ENCODE measurements at regions of chr11 and their contacts with region 1.

Region 1: DNA sequence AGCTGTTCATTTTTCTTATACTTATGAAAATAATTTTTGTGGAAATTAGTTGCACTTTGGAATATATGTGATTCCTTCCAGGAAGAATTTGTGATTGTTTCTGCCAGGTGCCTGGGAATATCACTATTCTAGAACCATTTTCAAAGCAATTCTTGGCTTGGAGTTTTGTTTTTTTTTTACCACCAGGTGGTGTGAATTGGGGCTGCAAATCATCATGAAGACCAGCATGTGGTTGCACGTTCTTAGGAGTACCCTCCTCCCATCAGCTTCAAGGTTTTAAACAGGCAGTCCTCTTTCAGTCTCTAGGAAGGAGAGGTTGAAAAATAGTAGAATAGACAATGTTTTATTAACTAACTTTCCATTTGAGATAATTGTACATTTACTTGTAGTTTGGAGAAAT is 25.9 kb downstream of the USP47 start:
- DNase-seq: no peak
- H3K4me3 ChIP-seq: no peak overlapping the region
- H3K27ac ChIP-seq: no peak overlapping the region
- H3K4me1 ChIP-seq: peaks cover 3 to 10% (median 8%) of the 10 kb centered on the region in 4 experiments
- H3K27me3 ChIP-seq: no peaks in the 10 kb centered on the region
- CTCF ChIP-seq: no peak
- EP300 ChIP-seq: no peak
- POLR2A ChIP-seq: no peak
- RAD21 ChIP-seq: no peak

Region 2: GRCh38 chr11:11351042-11351586 is 516.6 kb before region 1 on chr11:
- CTCF ChIA-PET with region 1: interaction called, 10 read pairs
- POLR2A ChIA-PET with region 1: no interaction called
- DNase-seq: no peak
- H3K4me3 ChIP-seq: no peak overlapping the region
- H3K27ac ChIP-seq: no peak overlapping the region
- H3K4me1 ChIP-seq: no peaks in the 10 kb centered on the region
- H3K27me3 ChIP-seq: no peaks in the 10 kb centered on the region
- CTCF ChIP-seq: no peak
- EP300 ChIP-seq: no peak
- POLR2A ChIP-seq: no peak
- RAD21 ChIP-seq: no peak

Region 3: DNA sequence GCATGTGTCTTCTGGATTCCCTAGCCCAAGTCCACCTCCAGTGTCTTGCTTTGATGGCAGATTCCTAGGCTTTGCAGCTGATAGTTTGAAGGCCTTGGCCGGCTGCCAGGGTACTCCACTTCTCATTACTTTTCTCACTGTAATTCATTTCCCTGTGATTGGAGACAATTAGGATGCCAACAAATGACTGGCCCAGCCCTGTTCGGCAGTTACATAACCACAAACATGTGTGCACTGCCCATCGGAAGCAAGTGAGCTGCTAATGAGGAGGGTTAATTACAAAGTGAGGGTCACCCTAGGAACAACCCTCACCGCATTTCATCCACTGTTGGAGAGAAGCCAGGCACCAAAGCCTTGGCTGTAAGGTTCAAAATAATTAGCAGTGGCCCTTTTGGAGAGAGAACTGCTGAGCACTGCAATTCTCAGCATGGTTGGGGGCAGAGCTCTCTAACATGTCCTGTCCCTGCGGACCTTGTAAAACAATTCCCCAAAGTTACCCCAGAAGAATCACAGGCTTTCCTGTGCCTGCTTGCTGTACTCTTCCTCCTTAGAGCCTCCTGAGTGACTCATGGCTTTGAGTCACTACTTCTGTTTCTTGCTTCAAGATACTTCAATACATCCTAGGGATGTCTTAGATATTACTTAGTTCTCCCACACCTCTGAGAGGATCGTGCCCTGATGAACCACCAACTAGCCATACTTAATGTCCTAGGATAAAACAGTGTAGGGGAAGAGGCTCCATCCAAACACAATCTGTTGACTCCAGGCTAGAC is 136.2 kb before region 1 on chr11:
- CTCF ChIA-PET with region 1: no interaction called
- POLR2A ChIA-PET with region 1: no interaction called
- DNase-seq: no peak
- H3K4me3 ChIP-seq: no peak overlapping the region
- H3K27ac ChIP-seq: no peak overlapping the region
- H3K4me1 ChIP-seq: peaks cover 2 to 6% (median 5%) of the 10 kb centered on the region in 4 experiments; a peak in 5 of 7 replicates
- H3K27me3 ChIP-seq: peaks cover 0 to 1% (median 0%) of the 10 kb centered on the region in 4 experiments; a peak in 1 of 7 replicates
- CTCF ChIP-seq: no peak
- EP300 ChIP-seq: no peak
- POLR2A ChIP-seq: no peak
- RAD21 ChIP-seq: no peak

Region 4: DNA sequence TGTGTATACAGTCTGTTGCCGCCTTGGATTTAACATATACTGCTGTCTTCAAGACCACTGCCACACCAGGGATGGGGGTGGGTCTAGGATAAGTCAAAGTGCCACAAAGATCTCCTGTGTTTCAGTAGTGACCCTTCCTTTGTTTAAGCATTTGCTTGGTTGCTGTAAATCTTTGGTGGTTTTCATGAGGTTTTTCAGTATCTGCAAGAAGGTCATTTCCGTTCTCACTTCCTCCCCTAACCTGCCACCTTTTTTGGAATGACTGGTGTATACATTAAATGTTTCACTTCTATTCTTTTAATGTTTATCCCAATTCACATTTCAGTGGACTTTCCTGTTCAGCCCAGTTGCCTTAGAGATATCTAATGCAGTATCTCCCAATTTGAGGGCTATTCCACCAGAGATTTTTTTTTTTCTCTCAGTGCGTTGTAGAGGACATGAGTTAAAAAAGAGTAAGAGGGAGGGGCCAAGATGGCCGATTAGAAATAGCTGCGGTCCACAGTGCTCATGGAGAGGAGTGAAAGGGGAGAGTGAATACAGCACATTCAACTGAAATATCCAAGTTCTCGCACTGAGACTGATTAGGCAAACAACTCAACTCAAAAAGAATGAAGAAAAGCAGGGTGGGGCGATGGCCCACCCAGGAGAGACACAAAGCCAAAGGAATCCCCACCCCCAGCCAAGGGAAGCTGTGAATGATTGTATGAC is 17.2 kb after region 1 on chr11:
- CTCF ChIA-PET with region 1: no interaction called
- POLR2A ChIA-PET with region 1: no interaction called
- DNase-seq: no peak
- H3K4me3 ChIP-seq: no peak overlapping the region
- H3K27ac ChIP-seq: no peak overlapping the region
- H3K4me1 ChIP-seq: no peaks in the 10 kb centered on the region
- H3K27me3 ChIP-seq: no peaks in the 10 kb centered on the region
- CTCF ChIP-seq: no peak
- EP300 ChIP-seq: no peak
- POLR2A ChIP-seq: no peak
- RAD21 ChIP-seq: no peak

Measured in H1 (cell line).